ENCODE measurements at regions of chr17 and their contacts with region 1.

Region 1: DNA sequence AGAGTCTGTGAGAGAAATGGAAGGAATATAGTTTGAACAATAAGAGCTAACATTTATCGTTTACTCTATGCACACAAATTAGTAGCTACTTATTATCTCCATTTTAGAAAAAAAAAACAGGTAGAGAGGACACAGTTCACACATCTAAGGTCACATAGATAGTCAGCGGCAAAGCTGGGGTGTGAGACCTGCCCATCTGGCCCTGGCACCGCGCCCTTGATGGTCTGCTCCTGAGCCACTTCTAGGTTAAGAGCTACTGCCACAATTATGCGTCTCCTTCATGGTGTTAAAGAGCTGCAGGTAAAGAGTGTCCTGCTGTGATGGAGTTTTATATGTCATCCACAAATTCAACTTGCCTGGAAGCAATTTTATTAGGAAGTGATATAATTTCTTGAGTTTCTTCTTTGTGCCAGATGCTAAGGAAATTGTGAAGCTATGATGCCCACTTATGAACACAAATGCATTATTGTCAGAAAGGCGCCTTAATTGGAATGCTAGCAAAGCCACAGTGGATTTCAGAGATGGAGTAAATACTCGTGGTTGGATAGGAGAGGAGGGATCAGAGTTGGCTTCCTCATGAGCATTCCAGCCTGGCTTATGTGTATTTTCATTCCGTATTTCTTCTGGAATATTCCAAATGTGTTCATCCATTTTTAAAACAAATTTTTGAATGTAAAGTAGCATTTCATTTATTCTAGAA is 21.3 kb upstream of the MFSD6L start:
- DNase-seq: no peak
- ATAC-seq: no peak
- H3K4me3 ChIP-seq: no peak overlapping the region
- H3K27ac ChIP-seq: no peak overlapping the region
- H3K4me1 ChIP-seq: no peaks in the 10 kb centered on the region
- H3K27me3 ChIP-seq: peaks cover 10% of the 10 kb centered on the region
- CTCF ChIP-seq: no peak
- POLR2A ChIP-seq: no peak
- RAD21 ChIP-seq: no peak

Region 2: DNA sequence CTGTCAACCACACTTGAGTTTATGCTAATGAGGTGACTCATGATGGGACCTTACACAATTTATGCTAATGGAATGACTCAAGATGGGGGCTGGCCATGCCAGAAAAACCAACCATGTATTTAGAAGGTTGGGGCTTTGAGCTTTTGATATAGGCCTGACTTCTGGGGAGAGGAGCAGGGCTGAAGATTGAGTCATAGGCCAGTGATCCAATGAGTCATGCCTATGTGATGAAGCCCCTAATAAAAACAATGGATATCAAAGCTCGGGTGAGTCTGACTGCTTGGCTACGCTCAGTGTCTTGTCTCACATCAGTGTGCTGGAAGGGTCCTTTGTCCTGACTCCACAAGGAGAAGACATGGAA is 28.6 kb before region 1 on chr17:
- CTCF ChIA-PET with region 1: no interaction called
- POLR2A ChIA-PET with region 1: no interaction called
- RAD21 ChIA-PET with region 1: no interaction called
- intact Hi-C with region 1: loop called (anchors 2 kb)
- DNase-seq: peak; percentile 19
- ATAC-seq: peak; percentile 38; the same call in 1 of the 2 replicates
- H3K4me3 ChIP-seq: no peak overlapping the region
- H3K27ac ChIP-seq: no peak overlapping the region
- H3K4me1 ChIP-seq: no peaks in the 10 kb centered on the region
- H3K27me3 ChIP-seq: no peaks in the 10 kb centered on the region
- CTCF ChIP-seq: no peak
- POLR2A ChIP-seq: no peak
- RAD21 ChIP-seq: no peak

Region 3: DNA sequence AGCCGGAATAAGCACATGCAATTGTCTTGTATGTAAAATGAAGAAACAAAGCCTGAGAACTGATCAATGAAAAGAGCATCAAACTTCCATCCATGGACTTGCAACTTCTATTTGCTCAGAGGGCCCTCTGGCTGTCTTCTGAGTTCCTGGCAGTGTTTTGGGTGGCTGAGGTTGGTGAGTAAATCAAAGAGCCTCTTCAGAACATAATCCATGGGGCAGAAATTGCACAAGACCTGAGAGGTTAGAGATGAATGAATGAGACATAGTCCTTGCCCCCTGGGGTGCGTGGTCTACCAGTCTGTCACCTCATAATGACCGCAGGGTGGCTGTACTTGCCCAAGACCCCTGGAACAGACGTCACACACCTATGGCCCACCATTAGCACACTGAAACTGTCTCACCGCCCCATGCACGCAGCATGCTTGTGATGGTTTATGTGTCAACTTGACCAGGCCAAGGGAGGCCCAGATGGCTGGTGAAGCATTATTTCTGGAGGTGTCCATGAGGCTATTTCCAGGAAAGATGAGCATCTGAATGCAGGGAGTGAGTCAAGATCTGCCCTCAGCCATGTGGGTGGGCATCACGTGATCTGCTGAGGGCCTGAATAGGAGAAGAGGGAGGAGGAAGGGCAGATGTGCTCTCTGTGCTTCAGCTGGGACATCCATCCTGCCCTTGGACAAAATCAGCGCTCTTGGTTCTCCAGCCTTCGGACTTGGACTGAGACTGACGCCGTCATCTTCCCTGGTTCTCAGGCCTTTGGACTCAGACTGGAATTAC is 38.8 kb after region 1 on chr17:
- CTCF ChIA-PET with region 1: no interaction called
- POLR2A ChIA-PET with region 1: no interaction called
- RAD21 ChIA-PET with region 1: no interaction called
- intact Hi-C with region 1: no loop called
- DNase-seq: no peak
- ATAC-seq: no peak
- H3K4me3 ChIP-seq: no peak overlapping the region
- H3K27ac ChIP-seq: no peak overlapping the region
- H3K4me1 ChIP-seq: no peaks in the 10 kb centered on the region
- H3K27me3 ChIP-seq: 0 out of 2 replicates have a peak, but pooled peaks cover 3% of the 10 kb centered on the region
- CTCF ChIP-seq: no peak
- POLR2A ChIP-seq: no peak
- RAD21 ChIP-seq: no peak